Posterior vena cava (tissue), 2 donors: ENCODE measurements at regions of chrX and their contacts with region 1.

Region 1: GRCh38 chrX:112642349-112642748 is 37.4 kb downstream of the LHFPL1 start:
- DNase-seq: no peak

Region 2: GRCh38 chrX:110665223-110666002 is 1976.9 kb before region 1 on chrX:
- intact Hi-C with region 1: no loop called
- DNase-seq: peak; percentile 76

Region 3: DNA sequence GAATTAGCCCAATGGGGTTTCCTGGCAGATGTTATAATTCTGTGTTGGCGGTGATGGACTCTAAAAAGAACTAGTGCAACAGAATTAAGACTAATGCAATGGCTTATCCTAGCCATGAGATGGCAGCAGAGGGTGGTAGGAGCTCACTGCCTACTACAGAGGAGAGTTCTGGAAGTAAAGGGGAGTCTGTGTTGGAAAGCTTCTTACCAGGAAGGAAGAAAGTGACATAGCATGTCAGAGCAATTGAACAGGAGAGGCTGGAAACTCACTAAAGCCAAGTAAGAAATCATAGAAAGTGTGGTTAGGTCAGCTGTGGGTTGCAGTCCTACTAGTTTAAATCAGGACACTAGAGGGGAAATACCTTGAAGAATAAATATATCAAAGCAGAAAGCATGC is 772.7 kb before region 1 on chrX:
- intact Hi-C with region 1: loop called in 1 of 2 experiments (anchors 5 kb)
- DNase-seq: no peak